WTC11 (cell line): ENCODE measurements at regions of chr14 and their contacts with region 1.

Region 1: DNA sequence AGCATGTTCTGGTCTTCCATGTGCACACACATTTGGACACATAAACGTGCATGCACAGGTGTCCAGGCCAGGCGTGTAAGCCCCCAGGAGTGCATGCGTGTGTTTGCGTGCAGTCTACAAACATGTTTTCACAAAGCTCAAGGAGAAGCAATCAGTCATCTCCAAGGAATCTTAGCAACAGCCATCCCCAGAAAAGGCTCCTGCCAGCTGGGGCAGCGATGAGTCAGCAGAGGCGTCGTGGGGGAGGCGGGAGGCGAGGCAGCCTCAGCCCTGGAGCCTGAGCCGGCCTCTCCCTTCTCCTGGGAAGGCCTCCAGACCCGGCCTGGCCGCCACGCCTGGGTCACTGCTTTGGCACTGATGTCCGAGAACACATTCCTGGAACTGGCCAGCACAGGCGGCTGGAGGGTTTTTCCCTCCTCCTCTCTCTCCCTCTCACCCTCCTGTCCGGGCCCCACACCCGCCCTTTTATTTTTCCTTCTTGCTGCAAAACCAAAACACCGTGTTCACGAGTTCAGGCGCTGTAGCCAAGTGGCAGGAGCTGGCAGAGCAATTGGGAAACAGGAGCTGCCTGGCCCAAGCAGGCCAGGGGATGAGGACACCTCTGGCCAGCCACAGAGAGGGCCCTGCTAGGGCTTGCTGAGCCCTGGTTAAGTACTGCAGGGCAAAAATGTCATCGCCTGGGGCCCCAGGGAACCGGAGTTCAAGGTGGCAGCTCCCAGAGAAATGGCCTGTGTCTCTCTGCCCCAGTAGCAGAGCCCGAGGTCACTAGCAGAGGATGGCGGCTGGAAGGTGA is 92.7 kb downstream of the LRRC74A start:
- DNase-seq: peak; percentile 53
- ATAC-seq: peak; percentile 33
- H3K4me3 Mint-ChIP-seq: no peak overlapping the region; the same call in 1 of the 2 replicates
- H3K27ac Mint-ChIP-seq: peak overlapping the region; percentile 85
- H3K4me1 Mint-ChIP-seq: peaks cover 81% of the 10 kb centered on the region
- H3K27me3 Mint-ChIP-seq: no peaks in the 10 kb centered on the region
- CTCF ChIP-seq: no peak

Region 2: DNA sequence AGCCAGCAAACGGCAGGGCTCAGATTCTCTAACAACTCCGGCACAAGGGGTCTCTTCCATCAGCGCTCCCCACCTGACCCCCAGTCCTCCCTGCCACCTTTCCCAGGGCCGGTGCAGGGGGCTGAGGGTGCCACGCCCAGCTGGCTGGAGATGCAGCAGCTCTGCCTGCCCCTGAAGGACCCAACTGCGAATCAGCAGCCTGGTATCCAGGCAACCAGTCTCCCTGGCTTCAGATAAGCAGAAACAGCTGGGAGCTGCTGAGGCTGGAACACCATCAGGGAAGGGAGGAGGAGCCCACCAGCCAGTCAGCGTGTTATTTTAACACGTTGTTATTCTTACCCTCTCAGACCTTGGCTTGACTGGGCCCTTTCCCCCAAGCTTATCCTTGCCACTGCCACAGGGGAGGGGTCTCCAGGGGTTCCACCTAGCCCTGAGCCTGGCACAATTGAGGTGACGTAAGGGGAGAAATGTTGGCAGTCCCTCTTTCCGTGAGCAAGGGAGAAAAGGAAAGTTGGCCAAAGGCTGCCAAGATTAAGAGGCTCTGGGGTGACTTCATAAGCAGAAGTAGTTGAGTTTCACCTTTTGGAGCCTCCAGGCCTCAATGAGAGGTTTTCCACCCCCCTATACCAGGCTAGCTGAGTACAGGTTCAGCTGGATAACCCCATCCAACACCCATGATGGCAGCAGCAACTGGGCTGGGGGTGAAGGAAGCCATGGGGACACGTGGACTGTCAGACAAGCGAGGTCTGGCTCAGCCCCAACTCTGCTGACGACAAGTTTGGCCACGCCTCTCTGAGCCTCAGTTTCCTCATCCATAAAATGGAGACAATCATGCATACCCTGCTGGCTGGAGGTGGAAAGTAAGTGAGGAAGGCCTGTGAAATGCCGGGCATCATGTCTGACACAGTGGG is 18.5 kb after region 1 on chr14:
- CTCF ChIA-PET with region 1: interaction called, 27 read pairs
- POLR2A ChIA-PET with region 1: interaction called, 4 read pairs
- DNase-seq: no peak
- ATAC-seq: peak; percentile 53
- H3K4me3 Mint-ChIP-seq: no peak overlapping the region
- H3K27ac Mint-ChIP-seq: peak overlapping the region; percentile 76; the same call in 1 of the 2 replicates
- H3K4me1 Mint-ChIP-seq: peaks cover 60% of the 10 kb centered on the region
- H3K27me3 Mint-ChIP-seq: no peaks in the 10 kb centered on the region
- CTCF ChIP-seq: no peak

Region 3: DNA sequence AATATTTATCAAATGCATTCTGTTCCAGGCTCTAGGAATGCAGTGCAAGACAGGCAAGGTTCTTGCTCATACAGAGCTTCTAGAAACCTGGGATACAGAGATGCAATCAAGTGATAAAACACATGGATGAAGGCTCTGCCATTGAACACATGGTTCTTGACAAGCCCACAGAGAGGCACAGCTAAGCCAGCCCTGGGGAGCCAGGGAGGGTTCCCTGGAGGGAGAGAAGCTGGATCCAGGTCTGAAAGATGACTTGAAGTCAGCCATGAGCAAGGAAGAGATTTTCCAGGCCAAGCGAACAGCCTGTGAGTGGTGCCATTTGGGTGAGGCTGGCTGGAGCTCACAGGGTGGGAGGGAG is 43.3 kb after region 1 on chr14:
- CTCF ChIA-PET with region 1: interaction called, 22 read pairs
- POLR2A ChIA-PET with region 1: interaction called, 11 read pairs
- DNase-seq: no peak
- ATAC-seq: no peak
- H3K4me3 Mint-ChIP-seq: peak overlapping the region; percentile 59
- H3K27ac Mint-ChIP-seq: peak overlapping the region; percentile 100
- H3K4me1 Mint-ChIP-seq: peaks cover 87% of the 10 kb centered on the region
- H3K27me3 Mint-ChIP-seq: no peaks in the 10 kb centered on the region
- CTCF ChIP-seq: no peak

Region 4: GRCh38 chr14:77023001-77023996 is 104.4 kb after region 1 on chr14:
- CTCF ChIA-PET with region 1: interaction called, 45 read pairs
- POLR2A ChIA-PET with region 1: interaction called, 38 read pairs
- DNase-seq: peak; percentile 44
- ATAC-seq: peak; percentile 40
- H3K4me3 Mint-ChIP-seq: peak overlapping the region; percentile 49
- H3K27ac Mint-ChIP-seq: peak overlapping the region; percentile 99
- H3K4me1 Mint-ChIP-seq: peaks cover 32% of the 10 kb centered on the region
- H3K27me3 Mint-ChIP-seq: peaks cover 2% of the 10 kb centered on the region; the same call in 1 of the 2 replicates
- CTCF ChIP-seq: no peak

Region 5: GRCh38 chr14:77053046-77053841 is 134.3 kb after region 1 on chr14:
- CTCF ChIA-PET with region 1: interaction called, 30 read pairs
- POLR2A ChIA-PET with region 1: interaction called, 3 read pairs
- DNase-seq: peak; percentile 92
- ATAC-seq: peak; percentile 94
- H3K4me3 Mint-ChIP-seq: no peak overlapping the region
- H3K27ac Mint-ChIP-seq: no peak overlapping the region
- H3K4me1 Mint-ChIP-seq: peaks cover 14% of the 10 kb centered on the region
- H3K27me3 Mint-ChIP-seq: no peaks in the 10 kb centered on the region
- CTCF ChIP-seq: peak; percentile 94

Region 6: GRCh38 chr14:77076113-77076631 is 157.2 kb after region 1 on chr14:
- CTCF ChIA-PET with region 1: interaction called, 66 read pairs
- POLR2A ChIA-PET with region 1: no interaction called
- DNase-seq: no peak
- ATAC-seq: peak; percentile 72
- H3K4me3 Mint-ChIP-seq: peak overlapping the region; percentile 51
- H3K27ac Mint-ChIP-seq: peak overlapping the region; percentile 93
- H3K4me1 Mint-ChIP-seq: peaks cover 31% of the 10 kb centered on the region
- H3K27me3 Mint-ChIP-seq: no peaks in the 10 kb centered on the region
- CTCF ChIP-seq: no peak

Region 7: GRCh38 chr14:77100961-77101360 is 182.0 kb after region 1 on chr14:
- CTCF ChIA-PET with region 1: no interaction called
- POLR2A ChIA-PET with region 1: no interaction called
- DNase-seq: no peak
- ATAC-seq: no peak
- H3K4me3 Mint-ChIP-seq: no peak overlapping the region
- H3K27ac Mint-ChIP-seq: no peak overlapping the region; the same call in 1 of the 2 replicates
- H3K4me1 Mint-ChIP-seq: peaks cover 73% of the 10 kb centered on the region
- H3K27me3 Mint-ChIP-seq: no peaks in the 10 kb centered on the region
- CTCF ChIP-seq: no peak